Panc1 (cell line): ENCODE measurements at regions of chr12 and their contacts with region 1.

Region 1: GRCh38 chr12:15050659-15051058 is 77.8 kb downstream of the PDE6H start:
- DNase-seq: no peak
- ATAC-seq: no peak
- H3K4me3 ChIP-seq: no peak overlapping the region
- H3K27ac ChIP-seq: no peak overlapping the region
- H3K4me1 ChIP-seq: no peaks in the 10 kb centered on the region
- H3K27me3 ChIP-seq: no peaks in the 10 kb centered on the region
- CTCF ChIP-seq: no peak

Region 2: DNA sequence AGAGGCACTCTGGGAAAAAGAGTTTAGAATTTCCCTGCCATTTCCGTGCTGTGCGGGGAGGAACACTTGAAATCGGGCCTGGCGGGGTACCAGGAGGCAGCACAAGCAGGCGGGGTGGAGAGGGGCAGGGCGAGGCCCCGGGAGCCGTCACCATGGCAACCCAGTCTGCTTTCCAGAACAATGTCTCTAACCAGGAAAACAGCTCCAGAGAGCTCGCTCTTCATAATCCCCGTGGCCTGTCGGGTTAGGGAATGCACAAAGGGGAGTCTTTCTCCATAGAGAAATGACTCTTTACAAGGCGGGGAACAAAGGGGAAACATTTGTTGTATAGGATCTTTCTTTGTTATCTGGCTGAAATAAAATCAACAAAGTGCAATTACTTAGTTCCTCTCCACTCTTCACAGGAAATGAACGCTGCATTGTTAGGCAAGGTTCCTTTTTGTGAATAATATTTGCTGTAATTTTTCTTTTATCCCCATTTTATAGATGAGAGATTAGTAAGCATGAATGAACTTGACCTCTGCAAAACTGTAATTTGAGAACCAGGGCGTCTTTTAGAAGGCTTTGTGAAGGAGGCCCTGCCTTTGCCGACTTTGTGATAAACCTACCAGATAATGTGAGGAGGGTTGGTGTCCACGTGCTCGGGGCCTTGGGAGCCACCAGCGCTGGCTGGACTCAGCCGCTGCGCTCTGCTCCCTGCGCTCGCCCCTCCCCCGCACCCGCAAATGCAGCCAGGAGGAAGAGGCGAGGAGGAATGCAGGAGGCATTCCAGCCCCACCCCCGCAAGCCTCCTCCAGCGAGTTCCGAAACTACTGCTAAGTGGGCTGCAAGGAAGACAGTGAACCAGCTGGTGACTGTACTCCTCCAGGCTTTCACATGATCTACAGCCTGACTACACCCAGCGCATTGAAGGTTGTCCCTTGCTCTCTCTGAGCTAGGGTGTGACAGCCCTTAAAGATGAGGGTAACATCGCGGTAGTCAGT is 790.4 kb before region 1 on chr12:
- CTCF ChIA-PET with region 1: no interaction called
- POLR2A ChIA-PET with region 1: no interaction called
- in situ Hi-C with region 1: no loop called
- intact Hi-C with region 1: no loop called
- DNase-seq: no peak
- ATAC-seq: peak; percentile 63; the same call in 1 of the 2 replicates
- H3K4me3 ChIP-seq: no peak overlapping the region
- H3K27ac ChIP-seq: peak overlapping the region; percentile 49; the same call in 1 of the 2 replicates
- H3K4me1 ChIP-seq: peaks cover 17% of the 10 kb centered on the region
- H3K27me3 ChIP-seq: no peaks in the 10 kb centered on the region
- CTCF ChIP-seq: no peak

Region 3: GRCh38 chr12:14854586-14855183 is 196.0 kb before region 1 on chr12:
- CTCF ChIA-PET with region 1: no interaction called
- POLR2A ChIA-PET with region 1: no interaction called
- in situ Hi-C with region 1: no loop called
- intact Hi-C with region 1: no loop called
- DNase-seq: no peak
- ATAC-seq: no peak
- H3K4me3 ChIP-seq: no peak overlapping the region
- H3K27ac ChIP-seq: no peak overlapping the region
- H3K4me1 ChIP-seq: no peaks in the 10 kb centered on the region
- H3K27me3 ChIP-seq: no peaks in the 10 kb centered on the region
- CTCF ChIP-seq: no peak

Region 4: GRCh38 chr12:14937689-14938088 is 113.0 kb before region 1 on chr12:
- CTCF ChIA-PET with region 1: no interaction called
- POLR2A ChIA-PET with region 1: interaction called, 10 read pairs
- in situ Hi-C with region 1: no loop called
- intact Hi-C with region 1: no loop called
- DNase-seq: no peak
- ATAC-seq: no peak
- H3K4me3 ChIP-seq: no peak overlapping the region
- H3K27ac ChIP-seq: no peak overlapping the region
- H3K4me1 ChIP-seq: no peaks in the 10 kb centered on the region
- H3K27me3 ChIP-seq: no peaks in the 10 kb centered on the region
- CTCF ChIP-seq: no peak